Mammary epithelial cell (primary cell): ENCODE measurements at regions of chr17 and their contacts with region 1.

Region 1: DNA sequence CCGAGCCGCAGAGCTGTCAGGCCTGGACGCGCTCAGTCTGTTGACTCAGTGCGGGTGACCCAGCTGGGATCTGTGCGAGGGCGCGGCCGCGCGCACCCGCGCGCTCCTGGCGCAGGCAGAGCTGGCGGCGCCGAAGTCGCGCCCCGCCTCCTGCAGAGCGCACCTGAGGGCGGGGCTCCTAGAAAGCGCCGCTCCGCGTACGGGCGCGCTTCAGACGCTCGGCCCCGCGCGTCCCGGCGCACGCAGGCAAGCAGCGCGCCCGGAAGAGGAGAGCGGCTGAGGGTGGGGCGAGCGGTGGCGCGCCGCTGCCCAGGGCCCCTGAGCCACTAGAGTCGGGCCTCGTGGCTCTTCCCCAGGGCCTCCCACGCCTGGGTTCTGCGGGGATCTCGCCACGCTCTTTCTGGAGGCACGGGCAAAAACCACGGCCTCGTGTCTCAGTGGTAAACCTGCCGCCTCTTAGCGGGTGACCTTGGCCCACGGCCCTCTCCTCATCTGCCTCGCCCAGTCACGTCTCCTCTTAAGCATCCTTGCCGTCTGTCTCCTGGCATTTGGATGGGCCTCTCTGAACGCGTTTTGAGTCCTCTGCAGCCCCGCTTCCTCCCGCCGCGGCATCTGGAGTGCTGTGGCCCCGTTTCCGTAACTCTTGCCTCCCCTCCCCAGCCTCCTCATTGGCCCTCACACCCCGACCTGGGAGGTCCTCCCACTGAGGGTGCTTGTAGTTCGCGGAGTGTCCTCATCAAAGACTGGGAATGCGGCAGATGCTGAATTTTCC is at the start of gene ABCA5:
- DNase-seq: peak; percentile 97
- H3K4me3 ChIP-seq: peak within 1 kb of the TSS; percentile 88 to 96 (median 95)
- H3K27ac ChIP-seq: peak within 1 kb of the TSS; percentile 89
- H3K4me1 ChIP-seq: peaks cover 6% of the 10 kb centered on the region
- H3K27me3 ChIP-seq: no peaks in the 10 kb centered on the region
- CTCF ChIP-seq: no peak
- total RNA-seq, gene ABCA5: 28.9 to 38.5 TPM

Region 2: GRCh38 chr17:67993596-67994361 is 1333.5 kb before region 1 on chr17:
- CTCF ChIA-PET with region 1: no interaction called
- dilution Hi-C with region 1: no loop called
- in situ Hi-C with region 1: no loop called
- intact Hi-C with region 1: loop called (anchors 5 kb)
- DNase-seq: peak; percentile 68
- H3K4me3 ChIP-seq: peak overlapping the region; percentile 72 to 87 (median 73)
- H3K27ac ChIP-seq: peak overlapping the region; percentile 2
- H3K4me1 ChIP-seq: peaks cover 24% of the 10 kb centered on the region
- H3K27me3 ChIP-seq: no peaks in the 10 kb centered on the region
- CTCF ChIP-seq: no peak

Region 3: DNA sequence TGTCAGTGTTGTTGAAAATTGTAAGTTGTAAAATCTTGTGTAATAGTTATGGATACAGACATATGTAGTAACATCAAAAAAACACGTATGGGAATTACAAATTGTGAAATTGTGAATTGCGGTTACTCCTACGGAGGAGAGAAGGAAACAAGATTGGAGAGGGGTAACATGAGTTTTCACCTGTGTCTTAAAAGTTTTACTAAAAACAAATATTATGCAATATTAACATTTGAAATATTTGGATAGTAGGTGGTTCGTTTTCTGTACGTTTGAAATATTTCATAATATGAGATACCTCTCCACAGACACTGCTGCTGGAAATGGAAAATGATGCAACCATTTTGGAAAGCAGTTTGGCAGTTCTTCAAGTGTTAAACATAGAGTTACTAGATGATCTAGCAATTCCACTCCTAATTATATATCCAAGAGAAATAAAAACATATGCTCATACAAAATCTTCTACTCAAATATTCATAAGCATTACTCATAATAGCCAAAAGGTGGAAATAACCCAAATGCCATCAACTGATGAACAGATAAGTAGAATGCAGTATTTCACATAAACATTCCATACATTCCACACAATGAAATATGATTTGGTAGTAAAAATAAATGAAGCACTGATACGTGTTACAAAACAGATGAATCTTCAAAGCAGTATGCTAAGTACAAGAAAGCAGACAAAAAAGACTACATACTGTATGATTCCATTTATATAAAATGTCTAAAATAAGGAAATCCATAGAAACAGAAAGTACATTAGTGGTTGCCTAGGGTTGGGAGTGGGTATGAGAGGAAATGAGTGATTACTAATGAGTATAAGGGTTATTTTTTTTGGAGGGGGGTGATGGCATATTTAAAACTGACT is 57.9 kb before region 1 on chr17:
- CTCF ChIA-PET with region 1: interaction called, 3 read pairs
- dilution Hi-C with region 1: no loop called
- in situ Hi-C with region 1: no loop called
- intact Hi-C with region 1: loop called (anchors 5 kb)
- DNase-seq: peak; percentile 48
- H3K4me3 ChIP-seq: no peak overlapping the region
- H3K27ac ChIP-seq: peak overlapping the region; percentile 13
- H3K4me1 ChIP-seq: peaks cover 15% of the 10 kb centered on the region
- H3K27me3 ChIP-seq: no peaks in the 10 kb centered on the region
- CTCF ChIP-seq: no peak

Region 4: DNA sequence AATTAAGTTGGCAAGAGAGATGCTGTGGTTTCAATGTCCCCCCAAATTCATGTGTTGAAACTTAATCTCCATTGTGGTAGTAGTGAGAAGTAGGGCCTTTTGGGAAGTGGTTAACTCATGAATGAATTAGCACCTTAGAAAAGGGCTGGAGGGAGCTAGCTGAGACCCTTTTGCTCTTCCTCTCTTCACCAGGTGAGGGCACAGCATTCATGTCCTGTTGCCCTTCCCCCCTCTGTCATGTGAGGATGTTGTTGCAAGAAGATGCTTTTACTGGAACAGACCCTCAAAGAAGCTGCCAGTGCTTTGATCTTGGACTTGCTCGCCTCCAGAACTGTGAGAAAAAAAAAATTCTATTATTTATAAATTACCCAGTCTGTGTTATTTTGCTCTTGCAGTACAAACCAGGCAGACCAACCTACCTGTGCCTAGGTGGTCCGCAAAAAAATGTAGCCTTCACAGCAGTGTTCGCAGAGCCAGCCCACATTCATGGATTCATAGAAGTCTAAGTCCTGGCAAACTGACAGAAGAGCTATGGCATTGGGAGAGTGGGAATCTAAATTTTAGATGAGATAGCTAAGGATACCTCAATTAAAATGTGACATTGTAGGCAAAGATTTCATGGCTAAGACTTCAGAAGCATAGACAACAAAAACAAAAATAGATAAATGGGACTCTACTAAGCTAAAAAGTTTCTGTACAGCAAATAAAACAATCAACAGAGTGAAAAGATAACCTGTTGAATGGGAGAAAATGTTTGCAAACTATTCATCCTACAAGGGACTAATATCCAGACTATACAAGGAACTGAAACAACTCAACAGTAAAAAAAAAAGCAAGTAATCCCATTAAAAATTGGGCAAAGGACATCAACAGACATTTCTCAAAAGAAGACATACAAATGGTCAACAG is 31.7 kb after region 1 on chr17:
- CTCF ChIA-PET with region 1: interaction called, 13 read pairs
- dilution Hi-C with region 1: no loop called
- in situ Hi-C with region 1: no loop called
- intact Hi-C with region 1: no loop called
- DNase-seq: no peak
- H3K4me3 ChIP-seq: no peak overlapping the region
- H3K27ac ChIP-seq: no peak overlapping the region
- H3K4me1 ChIP-seq: no peaks in the 10 kb centered on the region
- H3K27me3 ChIP-seq: no peaks in the 10 kb centered on the region
- CTCF ChIP-seq: peak; percentile 2 to 26

Region 5: GRCh38 chr17:69501591-69502468 is 174.6 kb after region 1 on chr17:
- CTCF ChIA-PET with region 1: no interaction called
- dilution Hi-C with region 1: no loop called
- in situ Hi-C with region 1: no loop called
- intact Hi-C with region 1: loop called (anchors 5 kb)
- DNase-seq: peak; percentile 20
- H3K4me3 ChIP-seq: peak overlapping the region in 1 of 3 experiments; percentile 30
- H3K27ac ChIP-seq: no peak overlapping the region
- H3K4me1 ChIP-seq: peaks cover 11% of the 10 kb centered on the region
- H3K27me3 ChIP-seq: no peaks in the 10 kb centered on the region
- CTCF ChIP-seq: no peak

Region 6: DNA sequence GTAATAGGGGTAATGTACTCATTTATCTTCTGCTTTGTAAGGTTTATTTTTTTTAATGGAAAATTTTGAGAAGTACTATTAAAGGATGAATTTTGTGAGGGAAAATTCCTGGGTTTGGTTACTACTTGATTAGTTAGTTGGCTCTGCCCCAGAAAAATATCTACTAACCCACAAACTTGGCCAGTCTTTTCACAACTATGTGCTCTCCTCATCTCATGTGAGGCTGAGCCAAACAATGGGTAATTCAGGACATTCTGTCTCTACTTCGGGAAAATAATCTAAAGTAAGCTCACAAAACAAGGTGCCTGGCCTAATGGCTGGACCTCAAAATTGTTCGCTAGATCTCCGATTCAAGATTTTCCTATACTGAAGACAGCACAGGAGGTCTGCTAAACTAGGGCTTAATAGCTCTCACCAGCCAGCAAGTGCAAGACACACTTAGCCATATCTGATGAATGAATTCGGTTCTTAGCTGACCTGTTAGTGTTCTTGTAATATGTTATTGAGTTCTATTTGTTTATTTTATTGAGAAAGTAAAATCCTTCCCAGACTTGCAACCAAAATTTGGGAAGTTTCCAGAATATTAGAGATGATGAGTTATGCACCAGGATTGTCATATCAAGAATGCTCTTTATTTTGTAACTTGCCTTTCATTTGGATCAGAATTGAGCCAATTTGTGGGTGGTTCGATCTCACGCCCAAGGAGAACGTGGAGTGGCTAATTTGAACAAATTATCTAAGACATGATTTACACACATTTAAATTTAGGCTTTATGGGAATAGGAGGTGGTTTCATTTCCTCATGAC is 753.5 kb after region 1 on chr17:
- CTCF ChIA-PET with region 1: no interaction called
- dilution Hi-C with region 1: no loop called
- in situ Hi-C with region 1: no loop called
- intact Hi-C with region 1: no loop called
- DNase-seq: peak; percentile 54
- H3K4me3 ChIP-seq: no peak overlapping the region
- H3K27ac ChIP-seq: no peak overlapping the region
- H3K4me1 ChIP-seq: peaks cover 22% of the 10 kb centered on the region
- H3K27me3 ChIP-seq: no peaks in the 10 kb centered on the region
- CTCF ChIP-seq: no peak